ENCODE measurements at regions of chr16 and their contacts with region 1.

Region 1: GRCh38 chr16:3059000-3059722 is 6.3 kb upstream of the IL32 start:
- DNase-seq: peak; percentile 86
- H3K4me3 Mint-ChIP-seq: peak overlapping the region; percentile 93
- H3K27ac Mint-ChIP-seq: peak overlapping the region; percentile 91
- H3K4me1 Mint-ChIP-seq: peaks cover 72% of the 10 kb centered on the region
- H3K27me3 Mint-ChIP-seq: no peaks in the 10 kb centered on the region

Region 2: GRCh38 chr16:3023669-3024478 is 35.3 kb before region 1 on chr16 and contains the starts of genes HCFC1R1 and THOC6:
- CTCF ChIA-PET with region 1: interaction called, 13 read pairs
- POLR2A ChIA-PET with region 1: interaction called, 5 read pairs
- DNase-seq: peak; percentile 97
- H3K4me3 Mint-ChIP-seq: peak within 1 kb of the TSS; percentile 84
- H3K27ac Mint-ChIP-seq: peak within 1 kb of the TSS; percentile 95
- H3K4me1 Mint-ChIP-seq: peaks cover 56% of the 10 kb centered on the region
- H3K27me3 Mint-ChIP-seq: peaks cover 4% of the 10 kb centered on the region
- total RNA-seq, gene HCFC1R1: 38.3 to 44.1 TPM
- total RNA-seq, gene THOC6: 49.5 to 58.4 TPM

Region 3: GRCh38 chr16:3045357-3045728 is 13.8 kb before region 1 on chr16:
- CTCF ChIA-PET with region 1: interaction called, 25 read pairs
- POLR2A ChIA-PET with region 1: no interaction called
- DNase-seq: peak; percentile 57
- H3K4me3 Mint-ChIP-seq: peak overlapping the region; percentile 76
- H3K27ac Mint-ChIP-seq: peak overlapping the region; percentile 81
- H3K4me1 Mint-ChIP-seq: peaks cover 31% of the 10 kb centered on the region
- H3K27me3 Mint-ChIP-seq: peaks cover 50% of the 10 kb centered on the region

Region 4: GRCh38 chr16:3099732-3100499 is 40.8 kb after region 1 on chr16:
- CTCF ChIA-PET with region 1: interaction called, 14 read pairs
- POLR2A ChIA-PET with region 1: no interaction called
- DNase-seq: peak; percentile 94
- H3K4me3 Mint-ChIP-seq: peak overlapping the region; percentile 84
- H3K27ac Mint-ChIP-seq: peak overlapping the region; percentile 91
- H3K4me1 Mint-ChIP-seq: peaks cover 71% of the 10 kb centered on the region
- H3K27me3 Mint-ChIP-seq: no peaks in the 10 kb centered on the region

Region 5: DNA sequence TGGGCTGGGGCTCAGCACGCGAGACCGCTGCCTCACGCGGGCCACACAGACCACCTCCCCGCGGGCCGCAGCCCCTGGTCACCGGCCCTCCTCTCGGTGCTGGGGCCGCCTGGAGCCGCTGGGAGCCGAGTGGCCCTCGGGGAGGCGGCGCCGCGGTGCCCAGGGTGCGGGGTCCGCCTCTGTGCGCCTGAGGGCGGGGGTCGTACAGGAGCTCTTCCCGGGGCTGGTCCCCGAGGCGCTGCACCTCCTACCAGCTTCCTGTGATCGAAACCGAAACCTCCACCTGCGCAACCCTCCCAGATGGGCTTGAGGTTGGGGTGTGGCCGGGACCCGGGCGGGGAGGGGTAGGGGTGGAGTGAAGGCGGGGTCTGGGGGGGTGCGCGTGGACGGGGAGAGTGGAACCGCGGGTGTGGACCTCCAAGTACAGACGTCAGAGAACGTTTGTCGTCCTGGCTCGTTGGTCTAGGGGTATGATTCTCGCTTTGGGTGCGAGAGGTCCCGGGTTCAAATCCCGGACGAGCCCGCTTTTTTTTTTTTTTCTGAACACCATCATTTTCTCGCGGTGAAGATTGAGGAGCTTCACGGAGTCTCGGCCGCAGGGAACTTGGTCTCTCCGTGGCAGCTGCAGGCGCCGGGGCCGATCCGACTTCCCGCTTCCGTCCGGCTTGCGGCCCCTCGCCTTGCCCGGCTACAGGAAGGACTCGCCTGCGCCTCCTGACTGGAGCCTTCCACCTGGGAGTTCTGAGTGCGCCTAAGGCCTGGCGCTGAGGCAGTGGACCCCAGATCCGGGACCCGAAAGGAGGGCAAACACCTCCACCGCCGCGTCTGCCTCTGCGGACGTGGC is 99.5 kb after region 1 on chr16:
- CTCF ChIA-PET with region 1: interaction called, 11 read pairs
- POLR2A ChIA-PET with region 1: no interaction called
- DNase-seq: peak; percentile 96
- H3K4me3 Mint-ChIP-seq: peak overlapping the region; percentile 88
- H3K27ac Mint-ChIP-seq: peak overlapping the region; percentile 91
- H3K4me1 Mint-ChIP-seq: peaks cover 47% of the 10 kb centered on the region
- H3K27me3 Mint-ChIP-seq: peaks cover 38% of the 10 kb centered on the region

Measured in activated CD4-positive, alpha-beta T cell treated with anti-CD3 and anti-CD28 coated beads, Interleukin-2, amount 10 ng/mL, durations not matched to agents 7 days and 5 days (primary cell).